CD8-positive, alpha-beta T cell (primary cell): ENCODE measurements at regions of chr12 and their contacts with region 1.

Region 1: GRCh38 chr12:14239350-14239934 is 126.0 kb upstream of the ATF7IP start:
- DNase-seq: peak in 5 of 9 experiments; percentile 22 to 64 (median 53)
- ATAC-seq: peak; percentile 57
- H3K4me3 ChIP-seq: peak overlapping the region; percentile 33
- H3K4me3 Mint-ChIP-seq: peak overlapping the region; percentile 74
- H3K27ac ChIP-seq: peak overlapping the region in 1 of 2 experiments; percentile 21
- H3K27ac Mint-ChIP-seq: peak overlapping the region; percentile 72
- H3K4me1 ChIP-seq: peaks cover 22% of the 10 kb centered on the region
- H3K4me1 Mint-ChIP-seq: peaks cover 18% of the 10 kb centered on the region
- H3K27me3 ChIP-seq: no peaks in the 10 kb centered on the region
- H3K27me3 Mint-ChIP-seq: no peaks in the 10 kb centered on the region
- CTCF ChIP-seq: no peak

Region 2: GRCh38 chr12:14216405-14217294 is 22.8 kb before region 1 on chr12:
- CTCF ChIA-PET with region 1: interaction called, 10 read pairs
- POLR2A ChIA-PET with region 1: no interaction called
- intact Hi-C with region 1: no loop called
- DNase-seq: peak in 2 of 9 experiments; percentile 48 to 61
- ATAC-seq: peak; percentile 52
- H3K4me3 ChIP-seq: peak overlapping the region; percentile 31 to 49
- H3K4me3 Mint-ChIP-seq: peak overlapping the region; percentile 76
- H3K27ac ChIP-seq: peak overlapping the region in 1 of 2 experiments; percentile 55
- H3K27ac Mint-ChIP-seq: peak overlapping the region; percentile 76
- H3K4me1 ChIP-seq: peaks cover 10% of the 10 kb centered on the region
- H3K4me1 Mint-ChIP-seq: peaks cover 19% of the 10 kb centered on the region
- H3K27me3 ChIP-seq: no peaks in the 10 kb centered on the region
- H3K27me3 Mint-ChIP-seq: no peaks in the 10 kb centered on the region
- CTCF ChIP-seq: no peak

Region 3: DNA sequence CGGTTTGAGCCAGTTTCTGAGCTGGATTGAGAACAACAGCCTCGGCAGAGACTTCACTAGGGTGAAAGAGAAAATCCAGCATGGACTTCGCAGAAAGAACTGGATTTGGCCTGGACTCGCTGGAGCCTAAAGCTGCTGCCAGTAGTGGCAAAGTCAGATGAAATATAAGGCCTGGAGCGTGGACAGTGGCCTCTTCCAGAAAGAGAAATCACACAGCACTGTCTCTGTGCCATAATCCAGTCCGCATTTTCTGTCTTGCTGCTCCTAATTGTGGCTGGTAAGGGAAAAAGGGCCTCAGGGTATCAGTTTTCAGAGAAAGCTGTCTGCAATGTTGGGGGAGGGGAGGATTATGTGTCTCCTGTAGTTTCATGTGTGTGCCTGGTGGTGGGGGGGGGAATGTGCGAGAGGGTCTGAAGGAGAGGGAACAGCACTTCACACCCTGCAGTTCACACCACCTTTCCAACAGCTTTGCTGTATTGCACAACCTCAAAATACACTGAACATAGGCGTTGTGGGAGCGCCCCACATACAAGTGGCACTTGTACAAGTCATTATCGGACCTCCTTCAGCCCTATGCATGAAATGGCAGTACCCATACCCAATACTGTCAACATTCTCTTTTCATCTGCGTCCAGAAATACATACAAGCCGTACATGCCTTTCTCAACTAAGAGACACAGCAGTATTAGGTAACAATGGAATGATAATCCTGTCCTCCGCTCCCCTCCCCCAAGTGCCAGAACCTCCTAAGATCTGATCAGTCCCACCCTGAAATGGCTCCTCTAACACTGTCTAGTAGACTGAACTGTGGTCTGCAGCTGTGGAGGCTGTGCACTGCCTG is 18.5 kb after region 1 on chr12:
- CTCF ChIA-PET with region 1: interaction called, 16 read pairs
- POLR2A ChIA-PET with region 1: interaction called, 7 read pairs
- intact Hi-C with region 1: loop called (anchors 1 to 2 kb)
- DNase-seq: peak; percentile 60 to 91 (median 84)
- ATAC-seq: peak; percentile 45
- H3K4me3 ChIP-seq: peak overlapping the region in 1 of 2 experiments; percentile 17
- H3K4me3 Mint-ChIP-seq: peak overlapping the region; percentile 73
- H3K27ac ChIP-seq: peak overlapping the region; percentile 72 to 87
- H3K27ac Mint-ChIP-seq: peak overlapping the region; percentile 99
- H3K4me1 ChIP-seq: peaks cover 39% of the 10 kb centered on the region
- H3K4me1 Mint-ChIP-seq: peaks cover 55% of the 10 kb centered on the region
- H3K27me3 ChIP-seq: no peaks in the 10 kb centered on the region
- H3K27me3 Mint-ChIP-seq: no peaks in the 10 kb centered on the region
- CTCF ChIP-seq: no peak

Region 4: DNA sequence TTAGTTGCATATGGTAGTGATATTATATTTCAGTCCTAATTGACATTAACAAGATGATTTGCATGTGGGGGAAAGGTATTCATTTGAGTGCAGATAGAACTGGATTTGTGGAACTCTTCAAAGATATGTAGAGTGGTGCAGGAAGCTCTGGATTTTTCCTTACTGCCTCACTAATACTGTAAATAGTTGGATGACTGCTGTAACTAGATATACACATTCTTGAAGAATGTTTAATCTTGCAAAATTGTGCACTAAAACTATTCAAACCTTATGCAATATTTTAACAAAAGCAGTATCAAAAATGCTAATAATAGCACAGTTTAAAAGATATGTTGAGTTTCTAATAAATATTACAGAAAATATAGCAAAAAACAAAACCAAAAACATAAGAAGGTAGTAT is 83.0 kb after region 1 on chr12:
- CTCF ChIA-PET with region 1: no interaction called
- POLR2A ChIA-PET with region 1: no interaction called
- intact Hi-C with region 1: no loop called
- DNase-seq: no peak
- ATAC-seq: no peak
- H3K4me3 ChIP-seq: no peak overlapping the region
- H3K4me3 Mint-ChIP-seq: no peak overlapping the region
- H3K27ac ChIP-seq: no peak overlapping the region
- H3K27ac Mint-ChIP-seq: no peak overlapping the region
- H3K4me1 ChIP-seq: no peaks in the 10 kb centered on the region
- H3K4me1 Mint-ChIP-seq: no peaks in the 10 kb centered on the region
- H3K27me3 ChIP-seq: no peaks in the 10 kb centered on the region
- H3K27me3 Mint-ChIP-seq: no peaks in the 10 kb centered on the region
- CTCF ChIP-seq: no peak

Region 5: GRCh38 chr12:14417715-14418114 is 178.3 kb after region 1 on chr12:
- CTCF ChIA-PET with region 1: interaction called, 9 read pairs
- POLR2A ChIA-PET with region 1: interaction called, 3 read pairs
- intact Hi-C with region 1: loop called (anchors 1 kb)
- DNase-seq: peak; percentile 45 to 91 (median 66)
- ATAC-seq: peak; percentile 69
- H3K4me3 ChIP-seq: peak overlapping the region in 1 of 2 experiments; percentile 25
- H3K4me3 Mint-ChIP-seq: peak overlapping the region; percentile 76
- H3K27ac ChIP-seq: peak overlapping the region; percentile 46 to 62
- H3K27ac Mint-ChIP-seq: peak overlapping the region; percentile 89
- H3K4me1 ChIP-seq: peaks cover 55% of the 10 kb centered on the region
- H3K4me1 Mint-ChIP-seq: peaks cover 64% of the 10 kb centered on the region
- H3K27me3 ChIP-seq: no peaks in the 10 kb centered on the region
- H3K27me3 Mint-ChIP-seq: no peaks in the 10 kb centered on the region
- CTCF ChIP-seq: no peak

Region 6: GRCh38 chr12:14618983-14619382 is 379.5 kb after region 1 on chr12:
- CTCF ChIA-PET with region 1: interaction called, 13 read pairs
- POLR2A ChIA-PET with region 1: no interaction called
- intact Hi-C with region 1: loop called in 1 of 2 experiments (anchors 1 kb)
- DNase-seq: peak in 2 of 9 experiments; percentile 35 to 48
- ATAC-seq: no peak
- H3K4me3 ChIP-seq: no peak overlapping the region
- H3K4me3 Mint-ChIP-seq: no peak overlapping the region
- H3K27ac ChIP-seq: no peak overlapping the region
- H3K27ac Mint-ChIP-seq: no peak overlapping the region
- H3K4me1 ChIP-seq: no peaks in the 10 kb centered on the region
- H3K4me1 Mint-ChIP-seq: no peaks in the 10 kb centered on the region
- H3K27me3 ChIP-seq: no peaks in the 10 kb centered on the region
- H3K27me3 Mint-ChIP-seq: peaks cover 22% of the 10 kb centered on the region
- CTCF ChIP-seq: no peak

Region 7: DNA sequence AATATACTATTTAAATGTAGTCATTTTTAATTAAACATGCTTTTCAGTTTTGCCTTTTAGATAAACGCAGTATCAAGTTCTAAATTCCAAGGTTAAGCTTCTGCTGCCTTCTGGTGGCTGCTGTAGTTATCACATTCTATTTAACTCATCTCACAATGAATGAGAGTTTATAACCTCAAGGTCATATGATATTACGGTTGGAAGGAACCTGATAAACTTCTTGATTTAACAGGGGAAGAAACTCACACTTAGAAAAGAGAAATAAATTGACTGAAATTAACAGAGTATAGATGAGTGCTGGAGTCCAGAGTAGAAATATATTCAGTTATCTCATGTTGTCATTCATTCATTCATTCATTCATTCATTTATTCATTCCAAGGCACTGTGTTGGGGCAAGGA is 425.1 kb after region 1 on chr12:
- CTCF ChIA-PET with region 1: interaction called, 21 read pairs
- POLR2A ChIA-PET with region 1: no interaction called
- intact Hi-C with region 1: loop called (anchors 1 kb)
- DNase-seq: peak in 6 of 9 experiments; percentile 7 to 66 (median 36)
- ATAC-seq: peak; percentile 85
- H3K4me3 ChIP-seq: no peak overlapping the region
- H3K4me3 Mint-ChIP-seq: no peak overlapping the region
- H3K27ac ChIP-seq: no peak overlapping the region
- H3K27ac Mint-ChIP-seq: no peak overlapping the region
- H3K4me1 ChIP-seq: no peaks in the 10 kb centered on the region
- H3K4me1 Mint-ChIP-seq: peaks cover 5% of the 10 kb centered on the region
- H3K27me3 ChIP-seq: no peaks in the 10 kb centered on the region
- H3K27me3 Mint-ChIP-seq: peaks cover 5% of the 10 kb centered on the region
- CTCF ChIP-seq: peak; percentile 87

Region 8: GRCh38 chr12:14995583-14996425 is 756.4 kb after region 1 on chr12:
- CTCF ChIA-PET with region 1: no interaction called
- POLR2A ChIA-PET with region 1: interaction called, 4 read pairs
- intact Hi-C with region 1: loop called in 1 of 2 experiments (anchors 10 kb)
- DNase-seq: peak in 2 of 9 experiments; percentile 78 to 85
- ATAC-seq: peak; percentile 70
- H3K4me3 ChIP-seq: no peak overlapping the region
- H3K4me3 Mint-ChIP-seq: peak overlapping the region; percentile 20
- H3K27ac ChIP-seq: no peak overlapping the region
- H3K27ac Mint-ChIP-seq: peak overlapping the region; percentile 63
- H3K4me1 ChIP-seq: peaks cover 29% of the 10 kb centered on the region
- H3K4me1 Mint-ChIP-seq: peaks cover 31% of the 10 kb centered on the region
- H3K27me3 ChIP-seq: no peaks in the 10 kb centered on the region
- H3K27me3 Mint-ChIP-seq: peaks cover 2% of the 10 kb centered on the region
- CTCF ChIP-seq: peak; percentile 75